Dorsolateral prefrontal cortex (tissue), 120 donors: ENCODE measurements at regions of chr13 and their contacts with region 1.

Region 1: DNA sequence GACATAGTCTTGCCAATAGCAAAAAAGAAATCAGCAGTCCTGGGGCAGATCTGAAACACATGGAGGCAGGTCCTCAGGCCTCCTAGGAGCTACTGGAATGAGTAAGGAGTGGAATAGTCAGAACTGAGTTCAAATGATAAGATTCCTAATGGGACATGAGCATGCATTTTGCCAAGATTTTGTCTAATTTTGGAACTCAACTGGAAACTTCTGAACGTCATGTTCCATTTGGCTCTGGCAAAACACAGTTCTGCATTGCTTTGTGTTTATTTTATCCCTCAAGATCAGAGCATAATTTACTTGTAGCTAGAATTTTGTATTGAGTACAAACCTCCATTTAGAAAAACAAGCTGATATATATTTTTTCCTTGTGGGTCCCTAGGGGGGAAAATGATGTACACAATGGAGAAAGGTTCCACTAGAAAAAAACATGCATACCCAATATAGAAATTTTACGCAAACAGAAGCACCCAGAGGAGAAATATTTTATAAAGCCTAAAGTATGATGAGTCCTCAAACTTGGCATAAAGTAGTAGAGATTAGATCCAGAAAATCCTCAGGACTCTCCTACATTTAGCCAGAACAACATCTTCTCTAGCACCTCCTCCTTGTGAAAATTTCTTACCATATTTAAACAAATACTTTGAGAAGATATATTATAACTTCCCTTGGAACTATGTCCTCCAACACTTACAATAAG is 149.0 kb upstream of the SERP2 start:
- DNase-seq: no peak
- H3K4me3 ChIP-seq: no peak overlapping the region
- H3K27ac ChIP-seq: peak overlapping the region in 58 of 59 donors; percentile 63 to 98 (median 88)
- H3K27me3 ChIP-seq: no peaks in the 10 kb centered on the region
- CTCF ChIP-seq: peak in 1 of 56 donors; percentile 6

Region 2: GRCh38 chr13:44160591-44161191 is 63.9 kb before region 1 on chr13:
- intact Hi-C with region 1: loop called in 1 of 2 experiments (anchors 2 kb)
- DNase-seq: peak in 9 of 10 donors; percentile 34 to 85 (median 69)
- H3K4me3 ChIP-seq: no peak overlapping the region
- H3K27ac ChIP-seq: peak overlapping the region in 58 of 59 donors; percentile 41 to 92 (median 82)
- H3K27me3 ChIP-seq: no peaks in the 10 kb centered on the region
- CTCF ChIP-seq: no peak